HAP-1 (cell line): ENCODE measurements at regions of chr1 and their contacts with region 1.

Region 1: GRCh38 chr1:234309598-234310459 is 63.4 kb upstream of the COA6 start:
- DNase-seq: peak; percentile 45 to 76
- H3K4me3 ChIP-seq: no peak overlapping the region
- H3K4me1 ChIP-seq: no peaks in the 10 kb centered on the region
- H3K27me3 ChIP-seq: peaks cover 9% of the 10 kb centered on the region; the same call in 1 of the 2 replicates

Region 2: DNA sequence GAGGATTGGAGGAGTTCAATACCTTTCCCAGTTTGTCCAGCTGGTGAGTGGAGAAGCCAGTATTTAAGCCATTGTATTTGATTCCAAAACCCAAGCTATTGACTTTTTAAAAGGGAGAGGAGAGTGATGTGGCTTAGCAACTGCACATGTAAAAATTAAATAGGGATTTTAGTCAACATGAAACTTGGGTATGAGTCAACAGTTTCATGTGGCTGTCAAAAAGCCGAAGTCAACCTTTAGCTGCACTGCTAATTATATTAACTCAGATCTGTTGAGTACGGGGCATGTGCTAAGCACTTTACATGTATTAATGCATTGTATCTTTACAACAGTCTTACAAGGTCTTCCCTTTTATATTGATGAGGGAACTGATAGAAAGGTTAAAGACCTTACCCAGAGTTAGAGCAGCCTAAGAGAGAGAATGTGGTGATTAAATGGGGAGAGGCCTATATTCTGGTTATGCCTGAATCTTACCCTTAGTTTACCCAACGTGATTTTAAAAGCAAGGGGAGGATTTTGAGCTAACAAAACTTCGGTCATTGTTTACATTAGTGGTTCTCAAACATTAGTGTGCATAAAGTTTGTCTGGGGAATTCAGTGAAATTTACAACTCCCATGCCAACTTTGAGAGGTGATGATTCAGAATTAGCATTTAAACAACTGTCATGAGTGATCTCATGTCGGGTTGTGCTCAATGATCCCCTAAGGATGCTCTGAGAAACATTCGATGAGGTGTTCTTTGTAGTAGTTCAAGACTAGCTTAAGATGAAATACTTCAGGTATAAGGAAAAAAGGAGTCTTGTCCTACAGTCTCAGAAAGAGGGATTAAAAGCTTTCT is 412.3 kb before region 1 on chr1:
- in situ Hi-C with region 1: no loop called
- DNase-seq: no peak
- H3K4me3 ChIP-seq: no peak overlapping the region
- H3K4me1 ChIP-seq: no peaks in the 10 kb centered on the region
- H3K27me3 ChIP-seq: no peaks in the 10 kb centered on the region

Region 3: GRCh38 chr1:234125283-234125682 is 184.5 kb before region 1 on chr1:
- in situ Hi-C with region 1: loop called (anchors 10 kb)
- DNase-seq: peak; percentile 41 to 78
- H3K4me3 ChIP-seq: no peak overlapping the region
- H3K4me1 ChIP-seq: no peaks in the 10 kb centered on the region; the same call in 1 of the 2 replicates
- H3K27me3 ChIP-seq: 0 out of 2 replicates have a peak, but pooled peaks cover 6% of the 10 kb centered on the region